ENCODE measurements at regions of chr12 and their contacts with region 1.

Region 1: GRCh38 chr12:50038336-50038735 is 13.0 kb upstream of the RACGAP1 start:
- DNase-seq: no peak
- H3K4me3 ChIP-seq: no peak overlapping the region
- H3K27ac ChIP-seq: no peak overlapping the region
- H3K4me1 ChIP-seq: no peaks in the 10 kb centered on the region
- H3K27me3 ChIP-seq: peaks cover 2 to 6% of the 10 kb centered on the region in 2 experiments
- CTCF ChIP-seq: no peak
- POLR2A ChIP-seq: no peak

Region 2: DNA sequence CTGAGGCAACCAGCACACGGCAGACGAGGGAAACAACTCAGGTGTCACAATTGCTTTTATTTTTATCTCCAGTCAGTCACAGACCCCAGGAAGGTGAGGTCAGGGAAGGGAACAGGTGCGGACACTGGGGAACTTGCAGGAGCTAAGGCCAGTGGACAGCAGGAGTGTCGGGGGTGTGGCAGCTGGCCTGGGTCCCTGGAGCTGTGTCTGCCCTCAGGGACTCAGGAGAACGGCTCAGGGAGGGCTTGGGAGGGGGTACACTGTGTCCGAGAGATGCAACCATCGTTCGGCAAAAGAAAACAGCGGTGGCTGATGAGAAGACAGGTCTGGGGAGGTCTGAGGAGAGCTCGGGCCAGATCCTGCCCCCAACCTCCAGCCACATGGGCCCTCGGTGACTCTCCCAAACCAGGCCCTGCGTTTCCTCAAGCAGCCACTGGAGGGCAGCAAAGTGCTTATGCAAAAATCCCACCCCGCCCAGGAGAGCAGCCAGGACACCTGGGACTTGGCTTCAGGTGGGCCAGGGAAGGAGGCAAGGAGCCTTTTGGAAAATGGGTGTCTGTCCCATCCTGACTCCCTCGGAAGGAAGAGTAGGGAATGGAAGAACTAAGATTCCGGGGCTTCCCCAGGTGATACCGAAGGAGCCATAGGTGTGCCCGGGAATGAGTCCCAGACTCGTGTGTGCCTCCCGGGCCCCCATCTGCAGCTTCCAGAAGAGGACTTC is 171.3 kb before region 1 on chr12:
- CTCF ChIA-PET with region 1: interaction called, 9 read pairs
- POLR2A ChIA-PET with region 1: no interaction called
- dilution Hi-C with region 1: no loop called
- intact Hi-C with region 1: loop called (anchors 5 kb)
- DNase-seq: peak; percentile 42
- H3K4me3 ChIP-seq: no peak overlapping the region
- H3K27ac ChIP-seq: no peak overlapping the region
- H3K4me1 ChIP-seq: peaks cover 20% of the 10 kb centered on the region
- H3K27me3 ChIP-seq: peaks cover 2 to 7% of the 10 kb centered on the region in 2 experiments
- CTCF ChIP-seq: peak; percentile 91 to 97
- POLR2A ChIP-seq: no peak

Region 3: DNA sequence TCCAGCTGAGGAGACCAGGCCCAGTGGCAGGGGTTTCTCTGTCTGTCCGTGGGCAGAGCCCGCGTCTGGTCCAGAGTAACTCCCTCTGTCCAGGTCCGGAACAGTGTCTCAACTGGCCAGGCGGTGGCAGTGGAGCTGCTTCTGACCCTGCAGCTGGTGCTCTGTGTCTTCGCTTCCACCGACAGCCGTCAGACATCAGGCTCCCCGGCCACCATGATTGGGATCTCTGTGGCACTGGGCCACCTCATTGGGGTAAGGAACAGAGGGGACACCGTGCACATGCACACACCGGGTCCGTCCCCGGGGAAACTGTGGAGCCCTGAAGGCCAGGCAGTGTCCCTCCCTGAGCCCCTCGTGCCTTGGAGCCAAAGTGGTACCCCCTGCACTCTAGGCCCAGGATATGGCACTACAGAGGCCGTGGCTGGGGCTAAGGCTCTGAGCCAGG is 64.1 kb before region 1 on chr12:
- CTCF ChIA-PET with region 1: interaction called, 55 read pairs
- POLR2A ChIA-PET with region 1: no interaction called
- dilution Hi-C with region 1: no loop called
- intact Hi-C with region 1: no loop called
- DNase-seq: peak; percentile 47
- H3K4me3 ChIP-seq: no peak overlapping the region
- H3K27ac ChIP-seq: no peak overlapping the region
- H3K4me1 ChIP-seq: no peaks in the 10 kb centered on the region
- H3K27me3 ChIP-seq: peaks cover 7 to 9% of the 10 kb centered on the region in 2 experiments
- CTCF ChIP-seq: peak; percentile 53 to 80
- POLR2A ChIP-seq: no peak

Region 4: DNA sequence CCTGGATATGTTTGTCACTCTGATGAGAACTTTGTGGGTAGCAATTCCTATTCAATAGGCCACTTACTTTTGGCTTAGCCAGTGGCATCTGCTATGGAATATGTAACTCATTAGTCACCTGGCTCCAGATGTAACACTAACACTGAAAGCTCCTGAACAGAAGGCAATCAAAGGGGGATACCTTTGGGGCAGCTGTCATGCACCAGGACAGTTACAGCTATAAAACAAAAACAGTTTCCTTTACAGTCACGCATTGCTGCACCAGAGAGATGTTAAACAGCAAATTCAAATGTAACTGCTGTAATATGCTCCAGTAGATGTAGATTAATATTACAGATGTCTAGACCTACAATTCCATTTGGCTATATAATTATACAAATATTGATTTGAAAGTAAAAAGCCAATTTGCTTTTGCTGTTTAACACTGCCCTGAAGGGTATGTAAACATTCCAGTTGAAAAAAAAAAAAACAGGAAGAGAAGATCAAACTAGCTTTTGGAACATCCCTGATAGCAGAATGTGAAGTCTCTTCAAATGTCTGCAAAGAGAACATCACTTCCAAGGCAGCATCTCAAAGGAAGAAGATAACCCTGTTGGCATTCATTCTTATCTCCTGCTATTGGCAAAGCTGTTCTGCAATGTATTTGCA is 31.4 kb before region 1 on chr12:
- CTCF ChIA-PET with region 1: interaction called, 17 read pairs
- POLR2A ChIA-PET with region 1: interaction called, 7 read pairs
- dilution Hi-C with region 1: no loop called
- intact Hi-C with region 1: no loop called
- DNase-seq: no peak
- H3K4me3 ChIP-seq: no peak overlapping the region
- H3K27ac ChIP-seq: no peak overlapping the region
- H3K4me1 ChIP-seq: peaks cover 3% of the 10 kb centered on the region
- H3K27me3 ChIP-seq: no peaks in the 10 kb centered on the region
- CTCF ChIP-seq: no peak
- POLR2A ChIP-seq: no peak

Region 5: DNA sequence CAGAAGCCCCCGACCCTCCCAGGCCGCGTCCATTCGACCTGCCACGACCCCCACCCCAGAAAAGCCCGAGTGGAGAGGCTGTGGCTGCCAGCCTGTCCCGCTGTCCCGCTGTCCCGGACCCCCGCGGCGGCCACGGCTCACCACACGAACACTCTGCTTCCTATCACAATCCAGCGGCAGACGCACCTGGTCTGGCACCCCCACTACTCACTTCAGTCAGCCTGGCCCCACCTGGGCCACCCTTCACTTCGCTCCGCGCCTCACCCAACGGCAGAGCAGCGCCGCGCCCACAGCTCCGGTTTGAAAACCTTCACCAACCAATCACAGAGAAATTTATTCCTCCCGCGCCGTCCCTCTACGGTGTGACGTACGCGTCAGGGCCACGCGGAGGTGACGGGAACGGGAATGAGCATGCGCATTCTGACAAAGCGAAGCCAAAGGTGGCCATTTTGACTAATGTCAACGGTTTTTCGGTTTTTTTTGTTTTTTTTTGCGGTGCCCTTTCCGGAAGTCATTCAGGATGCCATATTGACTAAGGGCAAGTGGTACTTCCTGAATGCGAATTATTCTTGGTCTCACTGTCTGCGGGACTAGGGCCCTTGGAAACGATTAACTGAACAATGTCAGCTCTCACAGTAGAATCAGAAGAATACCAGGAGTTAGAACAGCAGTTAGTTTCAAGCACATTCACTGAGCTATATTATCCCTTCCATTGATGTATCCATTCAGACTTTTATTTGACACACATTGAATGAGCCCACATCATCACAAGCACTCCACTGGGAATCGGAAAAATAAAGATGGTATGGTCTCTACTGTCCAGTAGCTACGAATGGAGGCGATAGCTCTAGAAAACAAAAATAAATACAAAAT is 12.9 kb before region 1 on chr12 and contains the start of gene RACGAP1:
- CTCF ChIA-PET with region 1: interaction called, 27 read pairs
- POLR2A ChIA-PET with region 1: no interaction called
- dilution Hi-C with region 1: no loop called
- intact Hi-C with region 1: no loop called
- DNase-seq: peak; percentile 99
- H3K4me3 ChIP-seq: peak within 1 kb of the TSS; percentile 40 to 98 (median 64)
- H3K27ac ChIP-seq: peak within 1 kb of the TSS; percentile 16
- H3K4me1 ChIP-seq: peaks cover 10% of the 10 kb centered on the region
- H3K27me3 ChIP-seq: peaks cover 14 to 17% of the 10 kb centered on the region in 2 experiments
- CTCF ChIP-seq: no peak
- POLR2A ChIP-seq: peak; percentile 31
- total RNA-seq, gene RACGAP1: 56.3 and 62.9 TPM in 2 replicates

Region 6: GRCh38 chr12:50066433-50066832 is 28.1 kb after region 1 on chr12:
- CTCF ChIA-PET with region 1: interaction called, 133 read pairs
- POLR2A ChIA-PET with region 1: no interaction called
- dilution Hi-C with region 1: no loop called
- intact Hi-C with region 1: loop called (anchors 1 kb)
- DNase-seq: no peak
- H3K4me3 ChIP-seq: no peak overlapping the region
- H3K27ac ChIP-seq: no peak overlapping the region
- H3K4me1 ChIP-seq: peaks cover 4% of the 10 kb centered on the region
- H3K27me3 ChIP-seq: peaks cover 25 to 26% of the 10 kb centered on the region in 2 experiments
- CTCF ChIP-seq: no peak
- POLR2A ChIP-seq: no peak

Measured in endothelial cell of umbilical vein (primary cell).